Panc1 (cell line): ENCODE measurements at regions of chr15 and their contacts with region 1.

Region 1: DNA sequence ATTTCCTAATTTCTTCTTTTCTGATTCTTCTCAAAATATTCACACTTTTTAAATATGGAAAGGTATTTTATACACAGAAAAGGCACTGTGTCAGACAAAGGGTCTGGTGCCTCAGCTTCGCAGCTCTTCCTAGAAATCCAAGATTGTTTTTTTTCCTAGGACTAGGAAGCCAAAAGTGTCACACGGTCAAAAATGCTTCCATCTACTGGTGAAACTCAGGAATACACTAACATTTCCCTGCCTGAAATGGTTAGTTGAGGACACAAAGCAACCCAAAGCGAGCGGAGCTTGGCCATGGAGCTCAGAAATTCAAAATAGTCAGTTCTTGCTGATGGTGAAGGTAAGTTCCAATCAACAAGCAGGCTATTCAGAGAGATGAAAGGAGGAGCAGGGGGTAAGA is 426.5 kb upstream of the RASGRP1 start:
- DNase-seq: peak; percentile 4
- ATAC-seq: no peak
- H3K4me3 ChIP-seq: no peak overlapping the region
- H3K27ac ChIP-seq: peak overlapping the region; percentile 42; the same call in 1 of the 2 replicates
- H3K4me1 ChIP-seq: no peaks in the 10 kb centered on the region
- H3K27me3 ChIP-seq: no peaks in the 10 kb centered on the region
- CTCF ChIP-seq: peak; percentile 49

Region 2: DNA sequence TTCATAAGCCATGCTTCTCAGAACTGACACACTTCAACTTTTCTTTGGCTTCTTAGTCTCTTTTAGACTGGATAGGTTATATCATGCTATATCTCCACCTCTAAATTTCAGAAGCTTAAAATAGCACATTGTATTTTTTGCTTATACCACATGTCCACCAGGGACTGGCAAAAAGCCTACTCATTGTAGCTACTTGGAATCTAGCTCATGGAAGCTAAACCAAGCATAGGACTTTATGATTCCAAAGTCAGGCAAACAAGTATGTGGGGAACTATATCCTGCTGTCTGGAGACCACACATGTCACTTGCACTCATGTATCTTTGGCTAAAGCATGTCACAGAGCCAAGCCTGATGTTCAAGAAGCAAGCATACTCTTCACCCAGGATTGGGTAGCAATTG is 181.5 kb before region 1 on chr15:
- CTCF ChIA-PET with region 1: no interaction called
- POLR2A ChIA-PET with region 1: no interaction called
- in situ Hi-C with region 1: no loop called
- intact Hi-C with region 1: loop called (anchors 5 kb)
- DNase-seq: no peak
- ATAC-seq: no peak
- H3K4me3 ChIP-seq: no peak overlapping the region
- H3K27ac ChIP-seq: no peak overlapping the region
- H3K4me1 ChIP-seq: no peaks in the 10 kb centered on the region
- H3K27me3 ChIP-seq: no peaks in the 10 kb centered on the region
- CTCF ChIP-seq: no peak